Caco-2 (cell line): ENCODE measurements at regions of chr1 and their contacts with region 1.

Region 1: DNA sequence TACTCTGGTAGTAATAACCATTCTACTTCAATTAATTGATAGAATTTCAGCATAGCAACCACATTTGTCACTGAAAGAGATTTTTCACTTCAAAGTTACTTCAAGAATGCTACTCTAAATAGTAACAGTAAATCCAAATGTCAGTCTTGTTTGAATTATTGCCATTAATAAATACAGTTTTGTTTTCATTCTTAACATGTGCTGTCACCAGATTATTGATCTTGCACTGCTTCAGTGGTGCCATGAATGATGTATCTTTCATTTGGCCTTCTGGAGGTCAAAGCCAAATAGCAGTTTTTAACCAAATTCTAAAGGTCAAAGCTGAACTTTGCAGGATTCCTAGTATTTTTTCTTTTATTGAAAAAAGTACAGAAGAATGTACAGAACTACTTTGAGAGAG is 199.5 kb downstream of the PATJ start:
- DNase-seq: no peak
- H3K4me3 ChIP-seq: no peak overlapping the region
- H3K4me3 Mint-ChIP-seq: no peak overlapping the region
- H3K27ac Mint-ChIP-seq: no peak overlapping the region
- H3K4me1 ChIP-seq: no peaks in the 10 kb centered on the region
- H3K4me1 Mint-ChIP-seq: no peaks in the 10 kb centered on the region
- H3K27me3 ChIP-seq: no peaks in the 10 kb centered on the region
- H3K27me3 Mint-ChIP-seq: no peaks in the 10 kb centered on the region
- CTCF ChIP-seq: no peak

Region 2: DNA sequence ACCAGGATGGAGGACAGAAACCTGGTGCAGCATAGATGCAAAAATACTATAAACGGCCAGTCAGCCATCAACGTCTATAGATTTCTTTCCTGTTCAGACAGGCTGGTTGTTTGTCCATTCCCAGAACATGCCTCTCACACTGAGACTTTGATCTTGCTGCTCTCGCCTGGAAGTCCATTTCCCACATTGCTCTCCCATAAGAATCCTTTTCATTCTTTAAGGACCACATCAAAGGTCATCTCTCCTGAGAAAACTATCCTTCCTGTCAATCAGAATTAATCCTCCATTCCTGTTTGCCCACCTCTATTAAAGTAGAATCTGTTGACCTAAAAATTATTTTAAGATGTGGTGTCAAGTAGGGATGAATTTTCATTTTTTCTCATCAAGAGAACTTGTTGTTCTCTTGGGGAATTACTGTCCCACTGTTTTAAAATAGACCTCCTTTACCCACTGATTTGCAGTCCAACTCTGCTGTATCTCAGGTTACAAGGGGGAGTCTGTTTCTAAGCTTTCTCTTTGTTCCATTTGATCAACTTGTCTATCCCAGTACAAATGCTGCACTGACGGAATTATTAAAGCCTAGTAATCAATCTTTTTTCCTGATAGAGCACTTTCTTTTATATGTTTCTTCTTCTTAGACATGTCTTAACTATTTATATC is 26.8 kb before region 1 on chr1:
- CTCF ChIA-PET with region 1: no interaction called
- POLR2A ChIA-PET with region 1: no interaction called
- intact Hi-C with region 1: no loop called
- DNase-seq: peak; percentile 42 to 63
- H3K4me3 ChIP-seq: no peak overlapping the region
- H3K4me3 Mint-ChIP-seq: peak overlapping the region; percentile 48
- H3K27ac Mint-ChIP-seq: peak overlapping the region; percentile 84
- H3K4me1 ChIP-seq: peaks cover 20% of the 10 kb centered on the region
- H3K4me1 Mint-ChIP-seq: peaks cover 14% of the 10 kb centered on the region
- H3K27me3 ChIP-seq: no peaks in the 10 kb centered on the region
- H3K27me3 Mint-ChIP-seq: no peaks in the 10 kb centered on the region
- CTCF ChIP-seq: no peak

Region 3: GRCh38 chr1:61975638-61976037 is 33.8 kb after region 1 on chr1:
- CTCF ChIA-PET with region 1: interaction called, 10 read pairs
- POLR2A ChIA-PET with region 1: no interaction called
- intact Hi-C with region 1: no loop called
- DNase-seq: no peak
- H3K4me3 ChIP-seq: no peak overlapping the region
- H3K4me3 Mint-ChIP-seq: no peak overlapping the region
- H3K27ac Mint-ChIP-seq: no peak overlapping the region
- H3K4me1 ChIP-seq: no peaks in the 10 kb centered on the region
- H3K4me1 Mint-ChIP-seq: peaks cover 7% of the 10 kb centered on the region
- H3K27me3 ChIP-seq: no peaks in the 10 kb centered on the region
- H3K27me3 Mint-ChIP-seq: no peaks in the 10 kb centered on the region
- CTCF ChIP-seq: no peak